Transverse colon (tissue), 4 donors: ENCODE measurements at regions of chr7 and their contacts with region 1.

Region 1: GRCh38 chr7:143096146-143096545 is 35.7 kb upstream of the PIP start:
- DNase-seq: no peak
- H3K4me3 ChIP-seq: no peak overlapping the region
- H3K27ac ChIP-seq: no peak overlapping the region
- H3K4me1 ChIP-seq: no peaks in the 10 kb centered on the region
- H3K27me3 ChIP-seq: no peaks in the 10 kb centered on the region
- CTCF ChIP-seq: no peak
- EP300 ChIP-seq: no peak
- POLR2A ChIP-seq: no peak

Region 2: DNA sequence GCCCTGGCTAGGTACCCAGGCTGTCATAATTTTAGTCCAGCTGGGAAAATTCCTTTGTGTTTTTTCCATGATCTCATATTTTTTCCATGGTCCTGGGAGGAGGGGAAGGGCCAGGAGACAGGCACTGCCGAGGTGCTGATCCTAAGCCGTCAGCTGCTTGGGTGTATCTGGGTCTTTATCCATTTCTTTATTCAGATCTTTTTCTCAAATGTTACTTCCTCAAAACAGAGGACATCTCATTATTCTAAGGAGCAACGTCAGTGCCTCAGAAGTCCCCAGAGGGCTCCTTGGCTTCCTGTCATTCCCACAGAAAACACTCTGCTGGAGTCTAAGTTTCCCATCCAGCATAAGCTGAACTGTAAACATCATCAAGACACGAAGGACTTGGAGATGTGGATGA is 46.8 kb before region 1 on chr7:
- in situ Hi-C with region 1: no loop called
- intact Hi-C with region 1: no loop called
- DNase-seq: no peak
- H3K4me3 ChIP-seq: no peak overlapping the region
- H3K27ac ChIP-seq: no peak overlapping the region
- H3K4me1 ChIP-seq: no peaks in the 10 kb centered on the region
- H3K27me3 ChIP-seq: no peaks in the 10 kb centered on the region
- CTCF ChIP-seq: no peak
- EP300 ChIP-seq: no peak
- POLR2A ChIP-seq: no peak

Region 3: GRCh38 chr7:143120696-143121405 is 24.7 kb after region 1 on chr7:
- in situ Hi-C with region 1: no loop called
- intact Hi-C with region 1: loop called (anchors 2 kb)
- DNase-seq: no peak
- H3K4me3 ChIP-seq: no peak overlapping the region
- H3K27ac ChIP-seq: no peak overlapping the region
- H3K4me1 ChIP-seq: no peaks in the 10 kb centered on the region
- H3K27me3 ChIP-seq: no peaks in the 10 kb centered on the region
- CTCF ChIP-seq: no peak
- EP300 ChIP-seq: no peak
- POLR2A ChIP-seq: no peak